Transverse colon (tissue), 4 donors: ENCODE measurements at regions of chr6 and their contacts with region 1.

Region 1: DNA sequence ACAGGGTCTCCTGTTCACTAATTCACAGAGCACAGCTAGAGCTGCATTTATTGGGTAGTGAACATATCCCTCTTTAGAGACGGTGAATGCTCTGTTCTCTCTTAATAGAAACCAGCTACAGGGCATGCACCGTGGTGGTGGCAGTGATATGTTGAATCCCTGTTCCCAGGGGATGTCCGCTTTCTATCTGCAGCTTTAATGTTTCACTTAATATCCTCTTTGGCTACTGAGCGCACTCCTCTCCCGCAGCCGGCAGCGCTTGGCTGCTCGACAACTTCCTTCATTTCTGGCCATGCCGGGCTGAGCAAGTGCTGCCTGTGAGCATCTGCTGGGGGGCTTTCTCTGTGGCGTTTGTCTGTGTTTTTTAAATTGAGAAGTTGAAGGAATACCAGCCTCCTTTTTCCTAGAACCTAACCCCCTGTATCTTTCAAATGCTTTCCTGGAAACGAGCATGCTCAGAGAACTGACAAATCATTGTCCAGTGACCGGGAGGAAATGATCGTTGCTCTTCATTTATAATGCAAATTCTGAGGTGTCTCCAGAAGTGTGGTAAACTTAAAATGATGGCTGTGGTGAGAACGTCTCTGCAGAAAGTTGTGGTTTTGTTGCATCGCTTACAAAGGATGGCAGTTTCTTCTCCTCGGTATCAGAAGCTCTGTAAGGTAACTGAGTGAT is 297.9 kb downstream of the UTRN start:
- DNase-seq: peak; percentile 26
- H3K4me3 ChIP-seq: peak overlapping the region in 2 of 4 donors; percentile 16 to 18
- H3K27ac ChIP-seq: peak overlapping the region in 1 of 4 donors; percentile 42
- H3K4me1 ChIP-seq: peaks cover 4 to 23% (median 9%) of the 10 kb centered on the region in 4 donors
- H3K27me3 ChIP-seq: no peaks in the 10 kb centered on the region
- CTCF ChIP-seq: no peak
- EP300 ChIP-seq: no peak
- POLR2A ChIP-seq: no peak

Region 2: DNA sequence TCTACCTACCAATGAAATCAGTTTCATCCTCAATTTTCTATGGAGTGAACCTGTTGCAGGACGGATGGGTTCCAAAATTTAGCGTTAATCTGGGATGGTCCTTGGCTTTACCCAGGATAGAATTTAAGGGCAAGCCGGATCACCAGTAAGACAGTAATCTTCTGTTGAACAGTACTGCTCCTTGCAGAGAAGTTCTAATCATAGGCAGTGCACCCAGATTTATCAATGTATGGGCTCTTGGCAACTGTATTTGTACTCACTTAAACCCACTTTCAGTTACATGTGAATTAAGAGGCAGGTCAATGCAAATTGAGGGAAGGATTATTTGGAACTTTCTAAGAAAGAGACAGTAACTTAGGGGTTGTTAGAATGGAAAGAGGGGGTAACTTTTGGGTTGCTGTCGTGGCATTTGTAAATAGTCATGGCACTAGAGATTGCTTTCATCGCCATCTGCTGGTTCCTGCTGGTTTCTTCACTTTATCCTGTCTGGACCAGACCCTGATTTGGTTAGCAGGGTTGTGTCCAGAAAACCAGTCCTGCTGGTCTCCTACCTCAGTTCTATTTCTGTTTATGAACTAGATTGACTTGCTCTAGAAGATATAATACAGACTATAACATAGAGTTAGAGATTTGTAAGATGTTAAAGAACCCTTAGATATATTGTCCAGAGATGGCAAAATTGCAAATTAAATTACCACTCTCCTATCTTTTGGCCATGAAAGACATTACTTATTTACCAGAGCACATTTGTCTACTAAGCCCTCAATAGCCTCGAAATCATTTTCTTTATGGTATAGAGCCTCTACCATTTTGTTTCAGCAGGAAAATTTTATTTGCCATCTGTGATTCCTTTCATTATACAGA is 348.3 kb after region 1 on chr6:
- in situ Hi-C with region 1: loop called in 3 of 4 experiments (anchors 10 to 25 kb)
- intact Hi-C with region 1: no loop called
- DNase-seq: peak; percentile 11
- H3K4me3 ChIP-seq: no peak overlapping the region
- H3K27ac ChIP-seq: no peak overlapping the region
- H3K4me1 ChIP-seq: no peaks in the 10 kb centered on the region
- H3K27me3 ChIP-seq: no peaks in the 10 kb centered on the region
- CTCF ChIP-seq: peak; percentile 38 to 65 (median 51)
- EP300 ChIP-seq: no peak
- POLR2A ChIP-seq: no peak

Region 3: GRCh38 chr6:145214570-145214969 is 631.5 kb after region 1 on chr6:
- in situ Hi-C with region 1: loop called in 3 of 4 experiments (anchors 25 kb)
- intact Hi-C with region 1: no loop called
- DNase-seq: no peak
- H3K4me3 ChIP-seq: no peak overlapping the region
- H3K27ac ChIP-seq: no peak overlapping the region
- H3K4me1 ChIP-seq: no peaks in the 10 kb centered on the region
- H3K27me3 ChIP-seq: no peaks in the 10 kb centered on the region
- CTCF ChIP-seq: peak; percentile 29 to 55 (median 42)
- EP300 ChIP-seq: no peak
- POLR2A ChIP-seq: no peak

Region 4: DNA sequence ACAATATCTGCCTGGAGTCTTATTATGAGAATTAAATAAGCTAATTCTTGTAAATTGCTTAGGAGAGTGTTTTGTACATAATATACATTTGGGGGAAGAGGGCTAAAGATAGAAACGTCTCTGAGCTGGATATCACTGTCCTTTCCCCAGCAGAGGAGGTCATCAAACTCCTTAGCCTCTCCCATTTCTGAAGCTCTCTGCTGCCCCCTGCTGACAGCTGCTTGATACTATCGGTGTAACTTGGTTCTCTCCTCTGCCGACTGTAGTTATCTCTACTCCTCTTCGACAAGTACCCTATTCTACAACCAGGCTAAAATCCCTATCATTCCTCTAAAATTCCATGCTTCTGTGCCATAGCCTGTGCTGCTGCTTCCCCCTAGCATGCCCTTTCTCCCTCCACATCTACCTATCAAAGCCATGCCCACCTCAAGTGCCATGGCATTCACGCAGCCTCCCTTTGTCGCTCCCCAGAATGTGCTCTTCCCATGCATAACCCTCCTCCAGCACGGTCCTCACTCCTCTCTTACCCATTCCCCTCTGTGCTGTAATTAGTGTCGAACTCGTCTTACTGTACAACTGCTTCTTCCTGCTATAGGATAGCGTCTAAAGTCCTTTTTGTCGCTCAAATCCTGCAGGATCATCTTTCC is 1051.0 kb after region 1 on chr6:
- in situ Hi-C with region 1: loop called in 2 of 4 experiments (anchors 25 kb)
- intact Hi-C with region 1: no loop called
- DNase-seq: peak; percentile 85
- H3K4me3 ChIP-seq: no peak overlapping the region
- H3K27ac ChIP-seq: no peak overlapping the region
- H3K4me1 ChIP-seq: peaks cover 0 to 3% (median 0%) of the 10 kb centered on the region in 4 donors
- H3K27me3 ChIP-seq: no peaks in the 10 kb centered on the region
- CTCF ChIP-seq: peak; percentile 65 to 83 (median 79)
- EP300 ChIP-seq: no peak
- POLR2A ChIP-seq: no peak